Naive thymus-derived CD8-positive, alpha-beta T cell (primary cell): ENCODE measurements at regions of chr22 and their contacts with region 1.

Region 1: DNA sequence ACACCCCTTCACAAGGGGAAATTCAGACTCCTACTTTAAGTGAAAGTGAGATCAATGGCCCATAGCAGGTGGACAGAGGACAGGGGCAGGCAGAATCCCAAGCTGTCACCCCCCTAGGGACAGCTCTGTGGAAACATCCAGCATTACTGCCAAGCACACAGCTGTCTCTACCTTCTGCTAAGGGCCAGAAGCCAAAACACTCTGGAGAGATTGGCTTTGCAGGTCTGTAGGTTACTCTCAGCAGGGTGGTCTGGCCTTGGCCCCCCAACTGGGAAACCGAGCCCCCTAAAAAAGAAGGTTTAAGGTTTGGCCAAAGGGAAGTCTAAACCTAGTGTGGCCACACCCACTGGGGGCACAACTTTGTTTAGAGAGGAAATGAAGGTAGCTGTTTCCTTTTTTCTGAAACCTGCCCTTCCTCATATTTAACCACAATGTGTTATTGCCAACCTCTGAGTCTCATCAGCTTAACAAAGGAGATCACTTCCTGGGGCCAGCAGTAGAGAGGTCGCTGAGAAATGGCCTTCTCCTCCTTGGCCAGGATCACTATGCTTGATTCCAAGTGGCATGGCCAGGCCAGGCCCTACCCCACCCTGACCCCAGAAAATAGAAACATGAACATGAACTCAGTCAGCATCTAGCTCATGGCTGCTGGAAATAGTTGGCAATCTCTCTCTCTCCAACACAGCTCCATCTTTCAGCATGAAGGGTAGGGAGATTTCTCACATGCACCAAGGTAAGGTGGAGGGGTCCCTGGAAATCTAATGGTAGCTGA is 25.9 kb upstream of the SCARF2 start:
- DNase-seq: peak in 9 of 10 donors; percentile 10 to 76 (median 49)
- ATAC-seq: peak; percentile 66 to 72
- H3K4me3 Mint-ChIP-seq: peak overlapping the region; percentile 37 to 84 (median 74)
- H3K27ac Mint-ChIP-seq: peak overlapping the region; percentile 90 to 99 (median 99)
- H3K4me1 Mint-ChIP-seq: peaks cover 32 to 78% (median 67%) of the 10 kb centered on the region in 4 donors
- H3K27me3 Mint-ChIP-seq: no peaks in the 10 kb centered on the region

Region 2: GRCh38 chr22:20319745-20320658 is 143.5 kb before region 1 on chr22 and contains the start of gene DGCR6L:
- POLR2A ChIA-PET with region 1: interaction called, 11 read pairs
- DNase-seq: peak; percentile 93 to 97 (median 95)
- ATAC-seq: peak; percentile 81 to 84
- H3K4me3 Mint-ChIP-seq: peak within 1 kb of the TSS; percentile 87 to 94 (median 93)
- H3K27ac Mint-ChIP-seq: peak within 1 kb of the TSS; percentile 73 to 95 (median 90)
- H3K4me1 Mint-ChIP-seq: peaks cover 27 to 66% (median 62%) of the 10 kb centered on the region in 4 donors
- H3K27me3 Mint-ChIP-seq: no peaks in the 10 kb centered on the region
- polyA plus RNA-seq, gene DGCR6L: 104 to 144 (median 124) TPM

Region 3: GRCh38 chr22:20430720-20431510 is 32.6 kb before region 1 on chr22:
- POLR2A ChIA-PET with region 1: interaction called, 35 read pairs
- DNase-seq: peak; percentile 36 to 73 (median 50)
- ATAC-seq: peak; percentile 63 to 70
- H3K4me3 Mint-ChIP-seq: peak overlapping the region; percentile 65 to 97 (median 86)
- H3K27ac Mint-ChIP-seq: no peak overlapping the region
- H3K4me1 Mint-ChIP-seq: peaks cover 16 to 42% (median 33%) of the 10 kb centered on the region in 4 donors
- H3K27me3 Mint-ChIP-seq: peaks cover 27 to 70% (median 39%) of the 10 kb centered on the region in 5 donors

Region 4: DNA sequence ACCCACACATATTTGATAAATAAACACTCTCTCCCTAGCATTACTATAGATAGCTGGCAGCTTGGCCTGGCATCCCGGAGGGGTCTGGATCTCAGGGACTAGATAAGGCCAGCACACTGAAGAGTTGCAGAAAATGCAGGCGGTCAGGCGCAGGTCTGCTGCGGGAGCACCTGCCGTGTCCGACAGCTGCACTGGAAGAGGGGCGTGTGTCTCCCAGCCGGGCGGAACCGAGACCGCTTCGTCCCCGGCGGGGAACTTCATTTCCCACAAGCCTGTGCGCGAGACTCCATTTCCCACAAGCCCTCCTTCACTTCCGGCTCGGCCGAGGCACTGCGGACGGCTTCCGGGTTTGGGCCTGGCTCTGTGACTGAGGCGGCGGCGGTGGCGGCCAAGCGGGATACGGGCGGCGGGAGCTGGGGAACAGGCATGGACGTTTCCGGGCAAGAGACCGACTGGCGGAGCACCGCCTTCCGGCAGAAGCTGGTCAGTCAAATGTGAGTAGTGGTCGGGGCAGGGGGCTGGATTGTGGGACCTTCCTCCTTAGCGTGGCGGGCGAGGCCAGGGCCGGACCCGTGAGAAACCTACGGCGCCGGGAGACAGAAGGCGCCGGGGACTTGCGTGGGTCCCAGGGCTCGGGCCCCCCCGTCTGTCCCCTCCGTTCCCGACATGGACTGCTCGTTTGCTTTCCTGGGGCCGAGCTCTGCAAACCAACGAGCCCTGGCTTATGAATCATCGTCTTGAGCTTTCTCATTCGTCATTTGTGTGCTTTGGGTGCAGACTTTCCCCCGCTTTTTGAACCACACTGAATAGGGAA is 44.0 kb after region 1 on chr22 and contains the start of gene MED15:
- POLR2A ChIA-PET with region 1: interaction called, 29 read pairs
- DNase-seq: peak; percentile 76 to 91 (median 84)
- ATAC-seq: peak; percentile 91 to 92
- H3K4me3 Mint-ChIP-seq: peak within 1 kb of the TSS; percentile 94 to 100 (median 97)
- H3K27ac Mint-ChIP-seq: peak within 1 kb of the TSS; percentile 94 to 100 (median 97)
- H3K4me1 Mint-ChIP-seq: peaks cover 35 to 59% (median 53%) of the 10 kb centered on the region in 4 donors
- H3K27me3 Mint-ChIP-seq: no peaks in the 10 kb centered on the region
- polyA plus RNA-seq, gene MED15: 25.4 to 85.2 (median 38.2) TPM

Region 5: DNA sequence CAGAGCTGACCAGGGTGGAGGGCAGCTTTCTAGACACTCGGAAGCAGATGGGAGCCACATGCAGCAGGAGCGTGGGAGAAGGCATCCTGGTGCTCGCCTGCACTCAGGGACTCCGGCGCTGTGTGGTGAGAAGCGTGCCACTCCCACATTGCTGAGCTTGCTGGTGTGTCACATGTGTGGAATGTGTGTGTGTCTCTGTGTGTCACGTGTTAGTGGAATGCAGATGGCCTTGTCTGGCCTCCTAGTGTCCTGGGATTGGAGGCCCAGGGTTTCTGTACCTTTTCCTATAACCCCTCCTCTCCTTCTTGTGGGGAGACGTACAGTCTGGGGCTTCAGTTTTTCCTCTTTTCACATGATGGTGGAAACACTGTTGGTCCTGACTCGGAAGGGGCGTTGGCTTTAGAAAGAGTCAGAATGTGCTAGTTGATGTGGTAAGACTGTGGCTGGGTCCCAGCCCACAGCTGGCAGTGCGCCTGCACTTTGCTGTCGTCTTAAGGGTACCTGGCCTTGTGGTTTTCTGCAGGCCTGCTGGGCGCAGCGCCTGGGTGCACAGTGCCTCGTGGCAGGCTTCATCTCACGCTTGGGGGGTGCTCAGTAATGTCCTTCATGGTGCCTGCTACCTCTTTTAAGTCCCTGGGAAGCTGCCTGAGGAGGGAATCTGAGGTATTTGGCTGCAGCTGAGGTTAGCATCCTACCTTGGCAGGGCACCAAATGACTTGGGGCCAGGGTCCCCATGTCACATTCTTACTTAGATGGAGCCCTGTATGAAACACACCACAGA is 105.7 kb after region 1 on chr22:
- POLR2A ChIA-PET with region 1: interaction called, 41 read pairs
- DNase-seq: peak; percentile 57 to 96 (median 90)
- ATAC-seq: peak; percentile 72 to 80
- H3K4me3 Mint-ChIP-seq: peak overlapping the region; percentile 72 to 91 (median 84)
- H3K27ac Mint-ChIP-seq: peak overlapping the region; percentile 92 to 99 (median 97)
- H3K4me1 Mint-ChIP-seq: peaks cover 42 to 93% (median 87%) of the 10 kb centered on the region in 4 donors
- H3K27me3 Mint-ChIP-seq: no peaks in the 10 kb centered on the region